ENCODE measurements at regions of chr2 and their contacts with region 1.

Region 1: DNA sequence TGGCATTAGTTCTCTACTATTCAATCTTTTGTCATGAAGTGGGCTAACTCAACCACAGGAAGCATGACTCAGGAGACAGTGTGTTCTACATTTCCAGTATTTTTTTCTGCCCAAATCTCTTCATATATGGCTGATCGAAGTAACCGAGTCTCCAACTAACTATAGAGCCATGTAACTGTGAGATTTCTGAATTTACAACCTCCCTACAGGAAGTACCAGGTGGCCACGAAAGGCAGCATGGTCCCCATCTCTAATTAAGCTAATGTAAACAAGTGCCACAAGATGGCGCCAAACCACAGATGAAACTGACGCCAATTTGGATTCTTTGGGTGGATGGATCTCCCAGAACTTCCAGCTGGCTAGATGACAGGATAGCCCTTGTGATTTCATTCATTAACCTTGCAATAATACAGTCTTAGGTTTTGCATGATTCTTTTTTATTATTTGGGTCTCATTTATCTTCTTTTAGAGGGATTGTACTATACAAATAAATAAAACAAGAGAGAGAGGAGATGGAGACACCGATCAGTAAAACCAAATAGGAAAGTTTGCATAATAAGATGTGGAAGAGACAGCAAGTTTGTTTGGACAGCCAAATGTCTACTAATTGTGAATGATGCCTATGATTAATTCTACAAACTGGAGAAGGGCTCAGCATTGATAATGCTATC is 18.3 kb upstream of the ARHGAP15 start:
- DNase-seq: peak; percentile 43 to 85 (median 59)
- H3K4me3 ChIP-seq: no peak overlapping the region
- H3K27ac ChIP-seq: no peak overlapping the region
- H3K4me1 ChIP-seq: no peaks in the 10 kb centered on the region
- H3K27me3 ChIP-seq: no peaks in the 10 kb centered on the region
- CTCF ChIP-seq: peak; percentile 50 to 81 (median 61)
- POLR2A ChIP-seq: no peak

Region 2: GRCh38 chr2:143259368-143259958 is 148.6 kb after region 1 on chr2:
- intact Hi-C with region 1: loop called in 1 of 2 experiments (anchors 10 kb)
- DNase-seq: peak; percentile 52 to 90 (median 62)
- H3K4me3 ChIP-seq: peak overlapping the region in 1 of 4 donors; percentile 8
- H3K27ac ChIP-seq: no peak overlapping the region
- H3K4me1 ChIP-seq: peaks cover 0 to 3% of the 10 kb centered on the region in 2 donors
- H3K27me3 ChIP-seq: no peaks in the 10 kb centered on the region
- CTCF ChIP-seq: peak; percentile 61 to 77 (median 66)
- POLR2A ChIP-seq: no peak

Measured in adrenal gland (tissue), 19 donors.